Activated T-helper 1 cell treated with anti-CD3 and anti-CD28 coated beads, Interleukin-12 subunit alpha, Interleukin-12 subunit beta, Interleukin-2, Interleukin-4 antibody, amounts not matched to agents 30 ng/mL and 10 ng/mL and 1 ng/mL, durations not matched to agents 14 hours and 24 hours and 36 hours (primary cell): ENCODE measurements at regions of chr5 and their contacts with region 1.

Region 1: GRCh38 chr5:145936401-145937131 is at the start of gene SH3RF2:
- DNase-seq: peak; percentile 26
- H3K4me3 Mint-ChIP-seq: peak within 1 kb of the TSS; percentile 72
- H3K27ac Mint-ChIP-seq: peak within 1 kb of the TSS; percentile 52
- H3K4me1 Mint-ChIP-seq: peaks cover 42% of the 10 kb centered on the region
- H3K27me3 Mint-ChIP-seq: peaks cover 51% of the 10 kb centered on the region
- total RNA-seq, gene SH3RF2: 0.18 TPM in 1 of 2 replicates, not detected in the other

Region 2: GRCh38 chr5:145834917-145835847 is 101.4 kb before region 1 on chr5 and contains the start of gene PRELID2:
- intact Hi-C with region 1: loop called (anchors 2 kb)
- DNase-seq: peak; percentile 46
- H3K4me3 Mint-ChIP-seq: peak within 1 kb of the TSS; percentile 70
- H3K27ac Mint-ChIP-seq: peak within 1 kb of the TSS; percentile 7
- H3K4me1 Mint-ChIP-seq: peaks cover 5% of the 10 kb centered on the region
- H3K27me3 Mint-ChIP-seq: peaks cover 18% of the 10 kb centered on the region
- total RNA-seq, gene PRELID2: 1.5 and 2.1 TPM in 2 replicates

Region 3: DNA sequence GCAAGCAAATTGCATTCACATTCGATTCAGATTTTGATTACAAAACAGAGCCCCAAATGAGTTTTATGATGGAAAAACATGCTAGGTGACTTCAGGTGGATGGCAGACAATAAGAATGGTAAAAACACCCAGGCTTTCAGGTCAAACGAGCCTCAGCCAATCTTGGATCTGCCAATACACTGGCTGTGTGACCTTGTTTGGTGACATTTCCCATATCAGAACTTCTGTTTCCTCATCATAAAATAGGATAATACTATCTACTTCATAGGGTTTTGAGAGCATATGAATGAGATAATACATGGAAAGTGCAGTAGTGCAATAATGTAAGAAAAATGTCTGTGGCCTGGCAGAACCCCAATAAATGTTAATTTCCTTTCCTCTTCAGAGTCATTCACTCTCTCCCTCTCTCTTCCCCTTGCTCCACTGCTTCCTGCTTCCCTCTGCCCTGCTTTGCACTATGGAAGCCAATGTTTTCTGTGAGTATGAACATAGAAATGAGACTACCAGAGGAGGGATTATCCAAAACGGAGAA is 54.5 kb after region 1 on chr5:
- intact Hi-C with region 1: no loop called
- DNase-seq: no peak
- H3K4me3 Mint-ChIP-seq: no peak overlapping the region
- H3K27ac Mint-ChIP-seq: no peak overlapping the region
- H3K4me1 Mint-ChIP-seq: no peaks in the 10 kb centered on the region
- H3K27me3 Mint-ChIP-seq: peaks cover 1% of the 10 kb centered on the region

Region 4: GRCh38 chr5:146662229-146662628 is 725.7 kb after region 1 on chr5:
- intact Hi-C with region 1: no loop called
- DNase-seq: no peak
- H3K4me3 Mint-ChIP-seq: no peak overlapping the region
- H3K27ac Mint-ChIP-seq: no peak overlapping the region
- H3K4me1 Mint-ChIP-seq: no peaks in the 10 kb centered on the region
- H3K27me3 Mint-ChIP-seq: no peaks in the 10 kb centered on the region